ENCODE measurements at regions of chr3 and their contacts with region 1.

Region 1: GRCh38 chr3:195909644-195910508 is 1.5 kb upstream of the TNK2 start:
- DNase-seq: no peak
- ATAC-seq: peak; percentile 54
- H3K4me3 ChIP-seq: peak overlapping the region; percentile 74
- H3K27ac ChIP-seq: peak overlapping the region; percentile 28; the same call in 1 of the 2 replicates
- H3K4me1 ChIP-seq: peaks cover 13% of the 10 kb centered on the region
- H3K27me3 ChIP-seq: no peaks in the 10 kb centered on the region
- CTCF ChIP-seq: no peak
- EP300 ChIP-seq: no peak
- POLR2A ChIP-seq: peak; percentile 62
- RAD21 ChIP-seq: no peak

Region 2: GRCh38 chr3:195863121-195864006 is 46.5 kb before region 1 on chr3:
- CTCF ChIA-PET with region 1: interaction called, 173 read pairs
- POLR2A ChIA-PET with region 1: interaction called, 9 read pairs
- RAD21 ChIA-PET with region 1: interaction called, 32 read pairs
- SMC1A ChIA-PET with region 1: interaction called, 68 read pairs
- in situ Hi-C with region 1: loop called (anchors 5 kb)
- intact Hi-C with region 1: loop called (anchors 1 kb)
- DNase-seq: no peak
- ATAC-seq: peak; percentile 97
- H3K4me3 ChIP-seq: no peak overlapping the region
- H3K27ac ChIP-seq: no peak overlapping the region
- H3K4me1 ChIP-seq: no peaks in the 10 kb centered on the region
- H3K27me3 ChIP-seq: no peaks in the 10 kb centered on the region
- CTCF ChIP-seq: peak; percentile 77 to 96 (median 80)
- EP300 ChIP-seq: no peak
- POLR2A ChIP-seq: no peak
- RAD21 ChIP-seq: peak; percentile 62

Region 3: GRCh38 chr3:195894780-195895607 is 14.9 kb before region 1 on chr3:
- CTCF ChIA-PET with region 1: interaction called, 94 read pairs
- POLR2A ChIA-PET with region 1: interaction called, 30 read pairs
- RAD21 ChIA-PET with region 1: interaction called, 34 read pairs
- SMC1A ChIA-PET with region 1: interaction called, 47 read pairs
- in situ Hi-C with region 1: no loop called
- intact Hi-C with region 1: loop called (anchors 1 kb)
- DNase-seq: peak; percentile 42
- ATAC-seq: peak; percentile 89
- H3K4me3 ChIP-seq: peak overlapping the region; percentile 90
- H3K27ac ChIP-seq: peak overlapping the region; percentile 79; the same call in 1 of the 2 replicates
- H3K4me1 ChIP-seq: peaks cover 19% of the 10 kb centered on the region
- H3K27me3 ChIP-seq: no peaks in the 10 kb centered on the region
- CTCF ChIP-seq: peak; percentile 87 to 96 (median 91)
- EP300 ChIP-seq: no peak
- POLR2A ChIP-seq: peak; percentile 70
- RAD21 ChIP-seq: peak; percentile 90

Region 4: DNA sequence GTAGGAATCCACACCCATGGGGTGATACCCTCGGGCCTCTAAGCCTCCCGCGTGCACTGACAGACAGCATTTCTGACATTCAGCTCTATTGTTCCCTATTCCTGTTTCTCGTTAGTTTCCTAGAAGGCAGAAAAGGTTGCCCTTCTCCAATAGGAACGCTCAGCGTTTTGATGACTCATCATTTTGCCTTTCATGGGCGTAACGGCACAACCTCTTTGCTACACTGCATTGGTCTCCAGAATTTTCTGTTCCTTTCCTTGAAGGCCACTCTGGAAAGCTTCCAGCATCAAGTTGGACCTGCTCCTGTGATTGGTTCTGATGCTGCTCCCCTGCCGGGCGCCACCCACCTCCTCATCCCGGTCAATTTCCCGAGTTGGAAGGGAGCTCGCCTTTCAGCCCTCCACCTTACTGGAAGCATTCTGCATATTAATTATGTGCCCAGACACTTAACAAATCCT is 11.5 kb after region 1 on chr3:
- CTCF ChIA-PET with region 1: interaction called, 19 read pairs
- POLR2A ChIA-PET with region 1: no interaction called
- RAD21 ChIA-PET with region 1: no interaction called
- SMC1A ChIA-PET with region 1: interaction called, 3 read pairs
- in situ Hi-C with region 1: no loop called
- intact Hi-C with region 1: no loop called
- DNase-seq: no peak
- ATAC-seq: no peak
- H3K4me3 ChIP-seq: no peak overlapping the region
- H3K27ac ChIP-seq: no peak overlapping the region
- H3K4me1 ChIP-seq: no peaks in the 10 kb centered on the region
- H3K27me3 ChIP-seq: no peaks in the 10 kb centered on the region
- CTCF ChIP-seq: no peak
- EP300 ChIP-seq: no peak
- POLR2A ChIP-seq: no peak
- RAD21 ChIP-seq: no peak

Region 5: DNA sequence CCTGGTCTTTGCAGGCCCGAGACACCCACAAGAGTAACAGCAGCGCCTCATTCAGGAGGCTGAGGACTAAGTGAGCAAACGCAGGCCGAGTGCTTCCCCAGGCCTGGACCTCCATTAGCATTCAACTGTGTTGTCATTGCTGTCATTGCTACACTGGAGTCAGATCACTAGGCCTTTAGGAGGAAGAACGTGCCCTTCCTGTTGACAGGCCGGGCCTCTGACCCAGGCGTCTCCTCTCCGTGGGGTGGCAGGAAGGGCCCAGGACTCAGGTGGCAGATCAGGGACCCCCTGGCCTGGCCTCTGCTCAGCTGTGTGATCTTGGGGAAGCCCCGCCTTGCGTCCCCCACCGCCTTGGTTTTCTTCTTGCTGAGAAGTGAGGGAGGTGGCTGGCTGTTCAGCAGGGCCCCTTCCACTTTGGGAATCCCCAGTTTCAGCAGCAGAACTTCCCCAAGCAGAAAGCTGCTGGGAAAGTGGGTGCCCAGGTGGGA is 282.2 kb after region 1 on chr3:
- CTCF ChIA-PET with region 1: no interaction called
- POLR2A ChIA-PET with region 1: no interaction called
- RAD21 ChIA-PET with region 1: no interaction called
- SMC1A ChIA-PET with region 1: interaction called, 3 read pairs
- in situ Hi-C with region 1: no loop called
- intact Hi-C with region 1: loop called (anchors 10 kb)
- DNase-seq: peak; percentile 74
- ATAC-seq: peak; percentile 77
- H3K4me3 ChIP-seq: peak overlapping the region; percentile 53; the same call in 1 of the 2 replicates
- H3K27ac ChIP-seq: peak overlapping the region; percentile 83
- H3K4me1 ChIP-seq: peaks cover 55% of the 10 kb centered on the region
- H3K27me3 ChIP-seq: no peaks in the 10 kb centered on the region
- CTCF ChIP-seq: peak in 1 of 3 experiments; percentile 5; a peak in 1 of 6 replicates
- EP300 ChIP-seq: peak; percentile 34 to 53; a peak in 3 of 4 replicates
- POLR2A ChIP-seq: peak; percentile 62
- RAD21 ChIP-seq: peak; percentile 42; the same call in 1 of the 2 replicates